ENCODE measurements at regions of chr6 and their contacts with region 1.

Region 1: DNA sequence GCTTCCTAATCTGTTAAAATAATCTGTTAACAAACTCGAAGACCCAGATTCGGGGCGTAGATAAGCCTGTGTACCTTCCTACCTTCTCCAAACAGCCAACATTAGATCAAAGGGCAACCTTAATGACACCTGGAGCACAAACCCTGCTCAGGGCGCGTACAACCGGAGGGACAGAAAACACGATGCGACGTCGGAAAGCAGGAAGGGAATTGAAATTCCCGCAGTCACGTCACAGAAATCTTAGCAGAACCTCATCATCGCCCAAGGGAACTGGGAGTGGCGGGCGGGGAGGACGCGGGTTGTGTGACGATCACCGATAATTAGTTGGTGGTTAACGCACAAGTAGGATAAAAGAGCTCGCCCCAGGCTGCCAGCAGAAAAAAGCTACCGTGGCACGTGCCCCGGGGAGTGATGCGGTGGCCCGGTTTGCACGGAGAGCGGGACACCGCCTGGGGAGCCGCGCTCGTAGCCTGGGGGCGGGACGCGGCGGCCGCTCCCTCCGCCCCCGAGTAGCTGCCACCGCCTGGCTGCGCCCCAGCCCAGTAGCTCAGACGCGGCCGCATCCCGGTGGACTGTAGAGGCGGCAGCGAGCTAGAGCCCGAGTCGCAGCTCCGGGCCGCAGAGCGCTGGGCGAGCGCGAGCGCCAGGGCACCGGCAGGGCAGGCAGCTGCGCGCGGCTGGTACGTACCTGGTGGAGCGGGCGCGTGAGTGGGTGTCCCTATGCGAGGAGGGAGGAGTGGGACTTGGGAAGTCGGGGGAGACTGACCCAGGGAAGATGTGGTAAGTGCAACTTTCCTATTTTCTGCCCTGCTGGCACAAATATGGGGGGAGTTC is at the start of gene PKIB:
- DNase-seq: peak; percentile 72
- ATAC-seq: peak; percentile 97
- H3K4me3 Mint-ChIP-seq: peak within 1 kb of the TSS; percentile 72
- H3K27ac Mint-ChIP-seq: peak within 1 kb of the TSS; percentile 64
- H3K4me1 Mint-ChIP-seq: peaks cover 14% of the 10 kb centered on the region
- H3K27me3 Mint-ChIP-seq: peaks cover 40% of the 10 kb centered on the region
- total RNA-seq, gene PKIB: 2.5 to 3.1 TPM

Region 2: DNA sequence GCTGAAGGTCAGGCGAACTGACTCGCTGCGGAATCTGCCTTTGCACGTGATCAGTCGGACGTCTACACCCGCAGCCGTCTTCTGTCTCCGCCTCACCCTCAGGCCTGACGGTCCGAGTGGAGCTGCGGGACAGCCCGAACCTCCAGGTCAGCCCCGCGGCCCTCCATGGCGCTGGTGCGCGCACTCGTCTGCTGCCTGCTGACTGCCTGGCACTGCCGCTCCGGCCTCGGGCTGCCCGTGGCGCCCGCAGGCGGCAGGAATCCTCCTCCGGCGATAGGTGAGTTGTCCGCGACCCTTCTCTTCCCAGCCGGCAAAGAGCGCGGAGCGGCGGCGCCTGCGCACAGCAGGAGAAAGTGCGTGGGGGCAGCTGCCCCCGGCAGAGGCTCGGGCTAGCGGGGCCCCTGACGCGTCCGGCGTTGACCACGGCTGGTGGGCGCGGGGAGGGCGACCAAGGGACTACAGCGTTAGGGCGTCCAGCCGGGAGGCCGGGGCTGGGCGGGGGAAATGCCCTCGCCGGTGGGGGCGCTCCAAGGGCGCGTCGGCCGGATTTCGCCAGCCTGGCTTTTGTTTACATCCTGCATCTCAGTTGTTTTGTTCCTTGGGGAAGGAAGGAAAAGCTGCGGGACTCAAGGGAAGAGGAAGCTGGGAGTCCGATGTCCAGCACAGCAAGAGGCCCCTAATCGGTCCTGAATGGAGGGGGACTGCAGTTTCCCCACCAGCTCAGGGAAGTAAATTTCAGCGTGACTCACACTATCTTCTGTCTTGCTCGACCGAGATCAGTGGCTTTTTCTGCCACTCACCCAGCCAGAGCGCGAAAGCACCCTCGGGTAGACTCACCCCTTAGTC is 179.3 kb after region 1 on chr6 and contains the start of gene SMPDL3A:
- CTCF ChIA-PET with region 1: interaction called, 3 read pairs
- POLR2A ChIA-PET with region 1: no interaction called
- intact Hi-C with region 1: loop called in 1 of 2 experiments (anchors 2 kb)
- DNase-seq: peak; percentile 49
- ATAC-seq: peak; percentile 89
- H3K4me3 Mint-ChIP-seq: peak within 1 kb of the TSS; percentile 72
- H3K27ac Mint-ChIP-seq: peak within 1 kb of the TSS; percentile 77
- H3K4me1 Mint-ChIP-seq: peaks cover 16% of the 10 kb centered on the region
- H3K27me3 Mint-ChIP-seq: peaks cover 50% of the 10 kb centered on the region
- total RNA-seq, gene SMPDL3A: not detected